ENCODE measurements at regions of chr14 and their contacts with region 1.

Region 1: GRCh38 chr14:65321370-65321875 is 91.1 kb upstream of the FUT8 start:
- DNase-seq: no peak
- ATAC-seq: no peak
- H3K4me3 ChIP-seq: peak overlapping the region in 1 of 5 experiments; percentile 0
- H3K4me3 Mint-ChIP-seq: peak overlapping the region; percentile 3
- H3K27ac ChIP-seq: peak overlapping the region; percentile 39 to 45
- H3K27ac Mint-ChIP-seq: peak overlapping the region; percentile 26
- H3K4me1 ChIP-seq: peaks cover 64 to 72% of the 10 kb centered on the region in 2 donors
- H3K4me1 Mint-ChIP-seq: peaks cover 75% of the 10 kb centered on the region
- H3K27me3 ChIP-seq: no peaks in the 10 kb centered on the region
- H3K27me3 Mint-ChIP-seq: no peaks in the 10 kb centered on the region
- CTCF ChIP-seq: no peak

Region 2: DNA sequence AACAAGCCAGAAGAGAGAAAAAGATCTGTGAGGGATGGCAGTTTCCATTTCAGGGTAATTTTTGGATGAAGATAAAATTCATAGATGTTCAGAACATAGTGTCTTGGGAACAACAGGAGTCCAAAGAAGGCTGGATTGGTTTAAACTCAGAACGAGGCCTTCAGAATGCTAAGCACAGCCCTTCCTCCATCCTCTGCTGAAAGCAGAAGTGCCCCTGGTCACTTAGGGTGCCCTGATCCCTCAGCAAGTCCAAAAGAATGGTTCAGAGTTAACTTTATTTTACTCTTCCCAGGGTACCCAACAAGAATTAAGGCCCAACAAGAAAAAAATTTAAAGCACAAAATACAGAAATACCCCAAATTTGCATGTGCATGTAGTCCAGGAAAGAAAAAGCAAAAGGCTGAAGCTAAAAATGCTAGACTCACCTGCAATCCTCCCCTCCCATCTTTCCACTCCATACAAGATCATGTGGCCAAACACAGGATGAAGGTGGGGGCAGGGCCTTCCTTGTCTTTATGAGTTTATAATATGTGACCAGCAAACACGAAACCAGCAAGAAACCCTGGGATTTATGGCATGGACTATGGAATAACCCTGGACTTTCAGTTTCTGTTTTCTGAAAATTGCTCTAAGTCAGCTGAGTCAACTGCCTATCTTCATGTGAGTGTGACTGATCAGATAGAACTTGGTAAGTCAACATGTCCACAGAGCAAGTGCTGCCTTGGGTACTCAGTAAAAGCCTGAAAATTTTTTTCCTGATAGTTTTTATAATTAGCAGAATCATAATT is 240.3 kb before region 1 on chr14:
- CTCF ChIA-PET with region 1: no interaction called
- POLR2A ChIA-PET with region 1: no interaction called
- intact Hi-C with region 1: no loop called
- DNase-seq: no peak
- ATAC-seq: no peak
- H3K4me3 ChIP-seq: no peak overlapping the region
- H3K4me3 Mint-ChIP-seq: no peak overlapping the region
- H3K27ac ChIP-seq: no peak overlapping the region
- H3K27ac Mint-ChIP-seq: no peak overlapping the region
- H3K4me1 ChIP-seq: peaks cover 0 to 12% of the 10 kb centered on the region in 2 donors
- H3K4me1 Mint-ChIP-seq: peaks cover 35% of the 10 kb centered on the region
- H3K27me3 ChIP-seq: no peaks in the 10 kb centered on the region
- H3K27me3 Mint-ChIP-seq: no peaks in the 10 kb centered on the region
- CTCF ChIP-seq: no peak

Region 3: GRCh38 chr14:65229751-65230749 is 91.4 kb before region 1 on chr14:
- CTCF ChIA-PET with region 1: interaction called, 4 read pairs
- POLR2A ChIA-PET with region 1: no interaction called
- intact Hi-C with region 1: loop called (anchors 1 kb)
- DNase-seq: peak; percentile 59
- ATAC-seq: peak; percentile 50
- H3K4me3 ChIP-seq: peak overlapping the region; percentile 36 to 60 (median 58)
- H3K4me3 Mint-ChIP-seq: peak overlapping the region; percentile 90
- H3K27ac ChIP-seq: peak overlapping the region; percentile 74 to 83
- H3K27ac Mint-ChIP-seq: peak overlapping the region; percentile 95
- H3K4me1 ChIP-seq: peaks cover 63 to 71% of the 10 kb centered on the region in 2 donors
- H3K4me1 Mint-ChIP-seq: peaks cover 58% of the 10 kb centered on the region
- H3K27me3 ChIP-seq: no peaks in the 10 kb centered on the region
- H3K27me3 Mint-ChIP-seq: no peaks in the 10 kb centered on the region
- CTCF ChIP-seq: no peak

Region 4: DNA sequence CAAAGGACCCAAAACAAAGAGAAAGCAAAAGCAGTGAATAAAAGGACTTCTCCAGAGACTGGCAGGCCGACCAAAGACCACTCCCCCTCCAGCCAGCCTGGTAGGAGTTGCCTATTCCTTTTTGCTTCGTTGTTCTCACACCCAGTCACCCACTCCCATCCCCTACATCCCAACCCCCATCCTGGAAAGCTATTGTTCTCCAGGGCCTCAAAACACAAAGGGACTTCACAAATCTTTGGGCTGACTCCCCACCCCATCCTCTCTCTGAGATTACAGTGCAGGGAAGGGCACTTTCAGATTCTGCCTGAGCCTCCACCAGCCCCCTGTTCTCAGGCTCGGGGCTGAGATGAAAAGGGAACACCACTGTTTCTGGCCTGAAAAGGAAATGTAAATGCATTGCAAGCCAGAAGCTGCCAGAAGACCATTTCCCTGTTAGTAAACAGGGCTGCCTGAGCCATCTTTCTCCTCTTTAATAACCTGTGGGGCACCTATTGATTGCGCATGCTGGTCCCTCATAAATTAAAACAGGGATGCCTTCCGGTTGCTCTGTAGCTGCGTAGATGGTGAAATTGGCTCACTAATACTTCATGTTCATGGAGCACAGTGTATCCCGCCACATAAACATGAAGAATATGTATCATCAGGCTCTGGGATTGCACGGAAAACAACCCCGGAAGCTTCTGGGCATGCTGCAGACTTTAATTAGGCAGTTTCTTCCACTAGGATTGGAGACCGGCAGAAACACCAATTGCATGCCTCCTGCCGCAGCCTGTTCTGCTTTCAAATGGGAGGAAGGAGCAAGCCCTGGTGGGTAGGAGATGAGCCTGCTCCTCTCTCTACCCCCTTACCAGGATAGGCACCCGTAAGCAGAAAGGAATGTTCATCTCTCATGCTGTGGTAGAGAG is 39.2 kb before region 1 on chr14:
- CTCF ChIA-PET with region 1: interaction called, 8 read pairs
- POLR2A ChIA-PET with region 1: interaction called, 22 read pairs
- intact Hi-C with region 1: loop called (anchors 1 kb)
- DNase-seq: peak; percentile 47
- ATAC-seq: peak; percentile 11
- H3K4me3 ChIP-seq: peak overlapping the region in 4 of 5 experiments; percentile 1 to 54 (median 38)
- H3K4me3 Mint-ChIP-seq: peak overlapping the region; percentile 85
- H3K27ac ChIP-seq: peak overlapping the region; percentile 60 to 83
- H3K27ac Mint-ChIP-seq: peak overlapping the region; percentile 91
- H3K4me1 ChIP-seq: peaks cover 47 to 48% of the 10 kb centered on the region in 2 donors
- H3K4me1 Mint-ChIP-seq: peaks cover 58% of the 10 kb centered on the region
- H3K27me3 ChIP-seq: no peaks in the 10 kb centered on the region
- H3K27me3 Mint-ChIP-seq: no peaks in the 10 kb centered on the region
- CTCF ChIP-seq: no peak

Region 5: GRCh38 chr14:65302571-65303189 is 18.7 kb before region 1 on chr14:
- CTCF ChIA-PET with region 1: interaction called, 50 read pairs
- POLR2A ChIA-PET with region 1: interaction called, 10 read pairs
- intact Hi-C with region 1: loop called (anchors 2 kb)
- DNase-seq: peak; percentile 44
- ATAC-seq: peak; percentile 8
- H3K4me3 ChIP-seq: no peak overlapping the region
- H3K4me3 Mint-ChIP-seq: peak overlapping the region; percentile 56
- H3K27ac ChIP-seq: peak overlapping the region; percentile 71 to 80
- H3K27ac Mint-ChIP-seq: peak overlapping the region; percentile 98
- H3K4me1 ChIP-seq: peaks cover 54 to 87% of the 10 kb centered on the region in 2 donors
- H3K4me1 Mint-ChIP-seq: peaks cover 75% of the 10 kb centered on the region
- H3K27me3 ChIP-seq: no peaks in the 10 kb centered on the region
- H3K27me3 Mint-ChIP-seq: no peaks in the 10 kb centered on the region
- CTCF ChIP-seq: no peak

Region 6: DNA sequence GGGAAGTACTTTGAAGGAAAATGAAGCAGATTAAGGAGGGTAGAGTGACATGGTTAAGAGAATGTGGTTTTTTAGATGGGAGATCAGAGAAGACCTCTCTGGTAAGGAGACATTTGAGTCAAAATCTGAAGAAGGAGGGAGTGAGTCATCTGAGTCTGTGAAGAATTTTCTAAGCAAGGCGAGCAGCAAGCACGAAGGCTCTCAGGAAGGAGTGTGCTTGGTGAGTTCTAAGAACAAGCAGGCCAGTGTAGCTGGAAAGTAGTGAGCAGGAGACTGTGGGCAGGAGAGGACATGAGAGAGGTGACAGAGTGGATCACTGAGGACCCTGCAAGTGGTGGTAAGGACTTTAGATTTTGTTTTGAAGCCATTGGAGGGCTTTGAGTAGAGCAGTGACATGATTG is 14.8 kb after region 1 on chr14:
- CTCF ChIA-PET with region 1: interaction called, 14 read pairs
- POLR2A ChIA-PET with region 1: no interaction called
- intact Hi-C with region 1: loop called (anchors 1 kb)
- DNase-seq: no peak
- ATAC-seq: peak; percentile 37
- H3K4me3 ChIP-seq: no peak overlapping the region
- H3K4me3 Mint-ChIP-seq: peak overlapping the region; percentile 7
- H3K27ac ChIP-seq: no peak overlapping the region
- H3K27ac Mint-ChIP-seq: peak overlapping the region; percentile 72
- H3K4me1 ChIP-seq: peaks cover 39 to 57% of the 10 kb centered on the region in 2 donors
- H3K4me1 Mint-ChIP-seq: peaks cover 52% of the 10 kb centered on the region
- H3K27me3 ChIP-seq: no peaks in the 10 kb centered on the region
- H3K27me3 Mint-ChIP-seq: no peaks in the 10 kb centered on the region
- CTCF ChIP-seq: no peak

Region 7: DNA sequence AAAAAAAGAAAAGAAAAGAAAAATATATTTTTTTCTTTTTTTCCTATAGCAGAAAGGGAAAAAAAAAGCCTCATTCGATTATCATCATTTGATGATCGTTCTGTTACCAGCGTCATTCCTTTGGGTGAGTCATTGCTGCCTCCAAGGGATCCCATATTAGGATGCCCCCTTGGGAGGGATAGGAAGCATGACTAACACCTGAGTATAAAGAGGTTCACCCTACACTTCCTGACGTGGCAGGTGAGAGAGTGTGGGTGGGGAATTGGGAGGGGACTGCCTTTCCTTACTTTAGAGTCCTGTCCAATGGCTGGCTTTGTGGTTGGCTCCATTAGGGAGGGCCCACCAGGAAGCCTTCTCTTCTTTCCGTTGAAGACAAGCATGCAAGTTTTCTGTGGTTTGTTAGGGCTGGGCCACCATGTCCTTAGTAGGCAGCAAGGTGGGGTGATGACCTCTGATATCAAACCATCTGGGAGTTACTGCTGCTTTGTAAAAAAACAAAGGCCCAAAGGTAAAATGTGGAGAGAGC is 35.0 kb after region 1 on chr14:
- CTCF ChIA-PET with region 1: interaction called, 5 read pairs
- POLR2A ChIA-PET with region 1: interaction called, 8 read pairs
- intact Hi-C with region 1: loop called (anchors 1 kb)
- DNase-seq: no peak
- ATAC-seq: no peak
- H3K4me3 ChIP-seq: no peak overlapping the region
- H3K4me3 Mint-ChIP-seq: no peak overlapping the region
- H3K27ac ChIP-seq: peak overlapping the region; percentile 40 to 61
- H3K27ac Mint-ChIP-seq: peak overlapping the region; percentile 79
- H3K4me1 ChIP-seq: peaks cover 58 to 84% of the 10 kb centered on the region in 2 donors
- H3K4me1 Mint-ChIP-seq: peaks cover 73% of the 10 kb centered on the region
- H3K27me3 ChIP-seq: no peaks in the 10 kb centered on the region
- H3K27me3 Mint-ChIP-seq: no peaks in the 10 kb centered on the region
- CTCF ChIP-seq: no peak

Region 8: DNA sequence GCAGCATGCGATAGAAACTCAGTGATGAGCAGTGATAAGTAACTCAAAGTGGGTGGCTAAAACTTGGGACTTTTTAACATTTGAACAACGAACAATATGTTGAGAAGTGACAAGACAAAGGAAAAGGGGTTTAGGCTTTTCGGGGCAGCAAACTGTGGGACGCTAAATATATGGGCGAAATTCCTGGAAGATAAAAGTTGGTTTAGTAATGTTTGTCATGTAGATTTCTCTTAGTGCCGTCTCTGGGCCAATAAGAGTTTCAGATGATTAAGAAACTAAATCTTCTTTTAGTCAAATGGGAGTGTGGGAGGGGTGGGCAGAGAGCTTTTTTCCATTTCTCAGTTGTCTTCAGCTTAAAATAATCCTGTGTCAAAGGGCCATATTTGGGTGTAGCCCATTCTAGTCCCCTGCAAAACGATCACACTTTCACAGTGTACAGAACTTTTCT is 49.4 kb after region 1 on chr14:
- CTCF ChIA-PET with region 1: no interaction called
- POLR2A ChIA-PET with region 1: no interaction called
- intact Hi-C with region 1: no loop called
- DNase-seq: no peak
- ATAC-seq: no peak
- H3K4me3 ChIP-seq: no peak overlapping the region
- H3K4me3 Mint-ChIP-seq: no peak overlapping the region
- H3K27ac ChIP-seq: no peak overlapping the region
- H3K27ac Mint-ChIP-seq: no peak overlapping the region
- H3K4me1 ChIP-seq: peaks cover 7 to 21% of the 10 kb centered on the region in 2 donors
- H3K4me1 Mint-ChIP-seq: peaks cover 26% of the 10 kb centered on the region
- H3K27me3 ChIP-seq: no peaks in the 10 kb centered on the region
- H3K27me3 Mint-ChIP-seq: no peaks in the 10 kb centered on the region
- CTCF ChIP-seq: no peak

Measured in B cell (primary cell).